Sciatic nerve (tissue), 2 donors: ENCODE measurements at regions of chr4 and their contacts with region 1.

Region 1: DNA sequence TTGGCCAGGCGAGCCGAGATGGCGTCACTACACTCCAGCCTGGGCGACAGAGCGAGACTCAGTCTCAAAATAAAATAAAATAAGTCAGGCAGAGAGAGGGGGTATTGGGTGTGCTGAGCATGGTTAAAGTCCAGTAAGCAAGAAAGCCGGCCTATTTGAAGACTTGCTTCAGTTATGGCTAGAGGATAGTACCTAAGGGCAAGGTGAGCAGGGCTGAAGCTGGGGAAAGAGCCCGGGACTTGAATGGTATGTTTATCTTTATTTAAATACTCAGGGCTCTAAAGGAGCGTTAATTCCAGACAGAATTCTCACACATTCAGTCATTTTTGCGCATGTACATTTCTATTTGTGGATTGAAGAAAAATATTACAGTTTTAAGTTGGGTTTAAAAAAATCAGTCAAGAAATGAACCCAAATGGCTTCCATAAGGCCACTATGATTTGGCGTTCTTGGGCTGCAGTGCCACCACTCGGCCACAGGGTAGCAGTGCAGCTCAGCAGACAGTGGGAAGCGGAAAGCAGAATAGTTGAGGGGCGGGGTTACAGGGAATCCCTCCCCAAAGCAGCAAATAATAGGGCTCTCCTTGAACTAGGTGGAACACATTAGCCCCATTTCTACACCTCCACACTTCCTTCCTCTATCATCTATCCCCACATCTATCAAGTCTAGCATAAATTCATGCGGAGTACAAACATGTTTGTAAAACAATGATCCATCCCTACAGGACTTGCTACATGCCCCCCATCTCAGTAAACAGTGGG is 37.2 kb upstream of the SH3D19 start:
- DNase-seq: peak; percentile 91
- ATAC-seq: peak; percentile 94

Region 2: DNA sequence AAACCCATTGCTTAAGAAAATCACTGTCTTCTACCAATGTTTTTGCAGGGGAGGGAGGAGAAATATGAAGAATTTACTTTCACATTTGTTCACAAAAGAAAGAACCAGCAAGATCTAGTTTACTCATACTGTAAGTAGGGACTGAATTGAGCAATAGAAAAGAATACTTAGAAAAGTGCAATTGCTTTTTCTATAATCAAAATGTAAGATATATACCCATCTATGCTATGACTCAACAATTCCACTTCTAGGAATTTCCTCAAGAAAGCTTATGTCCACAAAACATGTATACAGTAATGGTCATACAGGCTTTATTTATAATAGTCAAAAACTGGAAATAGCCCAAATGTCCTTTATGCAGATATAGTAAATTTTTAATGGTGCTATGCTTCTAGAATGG is 543.9 kb before region 1 on chr4:
- intact Hi-C with region 1: no loop called
- DNase-seq: no peak
- ATAC-seq: no peak

Region 3: DNA sequence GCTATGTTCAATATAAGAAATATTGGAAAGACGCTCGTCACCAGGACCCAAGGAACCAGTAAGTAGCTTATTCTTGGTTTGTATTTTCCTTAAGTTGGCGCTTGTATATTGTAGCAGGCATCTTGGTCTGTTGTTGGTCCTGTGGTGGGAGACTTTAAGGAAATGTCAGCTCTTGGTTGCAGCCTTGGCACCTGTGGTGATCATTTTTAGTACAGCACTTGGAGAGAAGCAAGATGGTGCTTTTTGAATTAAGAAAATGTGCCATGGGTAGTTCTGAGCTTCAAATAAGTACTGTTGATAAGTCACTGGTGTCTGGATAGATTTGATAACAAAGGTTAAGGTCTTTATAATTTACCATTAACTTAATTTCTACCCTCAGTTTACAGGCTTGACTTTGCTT is 262.1 kb before region 1 on chr4:
- intact Hi-C with region 1: no loop called
- DNase-seq: no peak
- ATAC-seq: no peak

Region 4: DNA sequence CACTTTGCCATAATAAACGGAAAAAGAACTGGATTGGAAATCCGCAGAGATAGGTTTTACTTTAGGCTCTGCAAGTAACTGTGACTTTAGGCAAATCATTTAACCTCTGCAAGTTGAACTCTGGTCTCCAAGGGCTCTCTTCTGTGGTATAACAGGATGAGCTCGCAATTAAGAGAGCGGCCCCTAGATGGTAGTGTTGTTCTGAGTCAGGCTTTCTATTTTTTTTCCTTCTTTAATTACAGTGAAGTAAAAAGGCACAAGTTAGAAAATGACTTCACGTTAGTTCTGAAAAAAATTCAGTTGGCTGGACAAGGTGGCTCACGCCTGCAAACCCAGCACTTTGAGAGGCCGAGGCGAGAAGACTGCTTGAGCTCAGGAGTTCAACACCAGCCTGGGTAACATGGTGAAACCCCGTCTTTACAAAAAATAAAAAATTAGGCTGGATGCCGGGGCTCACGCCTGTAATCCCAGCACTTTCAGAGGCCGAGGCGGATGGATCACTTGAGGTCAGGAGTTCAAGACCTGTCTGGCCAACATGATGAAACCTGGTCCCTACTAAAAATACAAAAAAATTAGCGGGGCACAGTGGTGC is 245.1 kb before region 1 on chr4:
- intact Hi-C with region 1: loop called (anchors 10 kb)
- DNase-seq: peak; percentile 79
- ATAC-seq: peak; percentile 88